ENCODE measurements at regions of chr2 and their contacts with region 1.

Region 1: GRCh38 chr2:57906152-57906732 is 140.4 kb upstream of the VRK2 start:
- DNase-seq: peak; percentile 57
- H3K4me3 ChIP-seq: no peak overlapping the region
- H3K27ac ChIP-seq: no peak overlapping the region
- H3K4me1 ChIP-seq: no peaks in the 10 kb centered on the region
- H3K27me3 ChIP-seq: no peaks in the 10 kb centered on the region
- CTCF ChIP-seq: peak; percentile 68 to 72
- POLR2A ChIP-seq: no peak

Region 2: DNA sequence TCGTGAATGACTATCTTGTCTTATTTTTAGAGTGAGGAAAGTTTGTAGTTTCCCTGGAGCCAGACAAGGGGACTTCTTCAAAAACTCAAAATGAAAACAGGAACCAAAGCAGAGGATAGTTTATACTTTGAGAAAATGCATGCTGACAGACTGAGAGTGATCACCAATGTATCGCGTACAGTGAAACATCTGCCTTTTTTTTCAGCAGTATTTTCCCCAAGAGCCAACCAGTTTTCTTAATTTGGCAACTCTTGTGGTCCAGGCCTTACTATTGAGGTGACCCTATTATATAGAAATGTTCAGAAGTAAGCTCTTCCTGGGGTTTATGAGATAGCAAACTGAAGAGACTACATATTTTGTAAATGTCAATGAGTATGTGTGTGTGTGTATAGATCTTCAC is 13.3 kb before region 1 on chr2:
- CTCF ChIA-PET with region 1: interaction called, 10 read pairs
- POLR2A ChIA-PET with region 1: no interaction called
- dilution Hi-C with region 1: no loop called
- intact Hi-C with region 1: no loop called
- DNase-seq: no peak
- H3K4me3 ChIP-seq: no peak overlapping the region
- H3K27ac ChIP-seq: no peak overlapping the region
- H3K4me1 ChIP-seq: no peaks in the 10 kb centered on the region
- H3K27me3 ChIP-seq: no peaks in the 10 kb centered on the region
- CTCF ChIP-seq: no peak
- POLR2A ChIP-seq: no peak

Region 3: DNA sequence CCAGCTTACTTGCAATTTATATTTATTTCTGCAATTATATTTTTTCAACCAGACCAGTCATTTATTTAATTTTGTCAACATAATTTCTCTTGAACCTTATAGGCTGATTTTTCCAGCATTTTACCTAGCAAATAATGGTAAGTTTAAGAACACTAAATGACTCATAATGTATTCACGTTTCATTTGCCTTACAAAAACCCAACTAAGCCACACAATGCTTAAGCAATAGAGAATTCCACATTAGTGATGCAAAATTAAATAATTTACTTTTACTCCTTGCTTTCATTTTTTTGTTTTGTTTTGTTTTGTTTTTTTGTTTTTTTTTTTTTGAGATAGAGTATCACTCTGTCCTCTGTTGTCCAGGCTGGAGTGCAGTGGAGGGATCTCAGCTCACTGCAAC is 30.0 kb after region 1 on chr2:
- CTCF ChIA-PET with region 1: no interaction called
- POLR2A ChIA-PET with region 1: no interaction called
- dilution Hi-C with region 1: no loop called
- intact Hi-C with region 1: no loop called
- DNase-seq: no peak
- H3K4me3 ChIP-seq: no peak overlapping the region
- H3K27ac ChIP-seq: no peak overlapping the region
- H3K4me1 ChIP-seq: no peaks in the 10 kb centered on the region
- H3K27me3 ChIP-seq: no peaks in the 10 kb centered on the region
- CTCF ChIP-seq: no peak
- POLR2A ChIP-seq: no peak

Region 4: GRCh38 chr2:58081000-58081399 is 174.8 kb after region 1 on chr2:
- CTCF ChIA-PET with region 1: no interaction called
- POLR2A ChIA-PET with region 1: no interaction called
- dilution Hi-C with region 1: no loop called
- intact Hi-C with region 1: no loop called
- DNase-seq: no peak
- H3K4me3 ChIP-seq: no peak overlapping the region
- H3K27ac ChIP-seq: no peak overlapping the region
- H3K4me1 ChIP-seq: no peaks in the 10 kb centered on the region
- H3K27me3 ChIP-seq: no peaks in the 10 kb centered on the region
- CTCF ChIP-seq: no peak
- POLR2A ChIP-seq: no peak

Region 5: GRCh38 chr2:58137221-58137620 is 231.0 kb after region 1 on chr2:
- CTCF ChIA-PET with region 1: interaction called, 7 read pairs
- POLR2A ChIA-PET with region 1: no interaction called
- dilution Hi-C with region 1: no loop called
- intact Hi-C with region 1: loop called (anchors 5 kb)
- DNase-seq: peak; percentile 85
- H3K4me3 ChIP-seq: no peak overlapping the region
- H3K27ac ChIP-seq: peak overlapping the region; percentile 48
- H3K4me1 ChIP-seq: peaks cover 16% of the 10 kb centered on the region
- H3K27me3 ChIP-seq: no peaks in the 10 kb centered on the region
- CTCF ChIP-seq: no peak
- POLR2A ChIP-seq: no peak

Region 6: GRCh38 chr2:58341047-58341446 is 434.8 kb after region 1 on chr2:
- CTCF ChIA-PET with region 1: no interaction called
- POLR2A ChIA-PET with region 1: no interaction called
- dilution Hi-C with region 1: no loop called
- intact Hi-C with region 1: loop called (anchors 10 kb)
- DNase-seq: no peak
- H3K4me3 ChIP-seq: no peak overlapping the region
- H3K27ac ChIP-seq: no peak overlapping the region
- H3K4me1 ChIP-seq: no peaks in the 10 kb centered on the region
- H3K27me3 ChIP-seq: no peaks in the 10 kb centered on the region
- CTCF ChIP-seq: no peak
- POLR2A ChIP-seq: no peak

Region 7: GRCh38 chr2:58448065-58448507 is 541.8 kb after region 1 on chr2:
- CTCF ChIA-PET with region 1: interaction called, 231 read pairs
- POLR2A ChIA-PET with region 1: no interaction called
- dilution Hi-C with region 1: no loop called
- intact Hi-C with region 1: loop called (anchors 1 kb)
- DNase-seq: peak; percentile 74
- H3K4me3 ChIP-seq: no peak overlapping the region
- H3K27ac ChIP-seq: no peak overlapping the region
- H3K4me1 ChIP-seq: no peaks in the 10 kb centered on the region
- H3K27me3 ChIP-seq: peaks cover 1 to 6% of the 10 kb centered on the region in 2 experiments
- CTCF ChIP-seq: peak; percentile 36 to 63
- POLR2A ChIP-seq: no peak

Region 8: GRCh38 chr2:58571181-58571852 is 665.1 kb after region 1 on chr2:
- CTCF ChIA-PET with region 1: interaction called, 4 read pairs
- POLR2A ChIA-PET with region 1: no interaction called
- dilution Hi-C with region 1: no loop called
- intact Hi-C with region 1: loop called (anchors 1 kb)
- DNase-seq: peak; percentile 84
- H3K4me3 ChIP-seq: no peak overlapping the region
- H3K27ac ChIP-seq: no peak overlapping the region
- H3K4me1 ChIP-seq: peaks cover 2% of the 10 kb centered on the region
- H3K27me3 ChIP-seq: no peaks in the 10 kb centered on the region
- CTCF ChIP-seq: peak; percentile 69 to 81
- POLR2A ChIP-seq: no peak

Measured in endothelial cell of umbilical vein (primary cell).